Endothelial cell of umbilical vein (primary cell): ENCODE measurements at regions of chr10 and their contacts with region 1.

Region 1: GRCh38 chr10:13074561-13075451 is 25.2 kb upstream of the OPTN start:
- DNase-seq: peak; percentile 61
- H3K4me3 ChIP-seq: no peak overlapping the region
- H3K27ac ChIP-seq: no peak overlapping the region
- H3K4me1 ChIP-seq: no peaks in the 10 kb centered on the region
- H3K27me3 ChIP-seq: peaks cover 5 to 7% of the 10 kb centered on the region in 2 experiments
- CTCF ChIP-seq: peak; percentile 83
- POLR2A ChIP-seq: no peak

Region 2: GRCh38 chr10:12884380-12884779 is 190.4 kb before region 1 on chr10:
- CTCF ChIA-PET with region 1: no interaction called
- POLR2A ChIA-PET with region 1: no interaction called
- dilution Hi-C with region 1: no loop called
- intact Hi-C with region 1: no loop called
- DNase-seq: no peak
- H3K4me3 ChIP-seq: no peak overlapping the region
- H3K27ac ChIP-seq: no peak overlapping the region
- H3K4me1 ChIP-seq: no peaks in the 10 kb centered on the region
- H3K27me3 ChIP-seq: no peaks in the 10 kb centered on the region
- CTCF ChIP-seq: no peak
- POLR2A ChIP-seq: no peak

Region 3: DNA sequence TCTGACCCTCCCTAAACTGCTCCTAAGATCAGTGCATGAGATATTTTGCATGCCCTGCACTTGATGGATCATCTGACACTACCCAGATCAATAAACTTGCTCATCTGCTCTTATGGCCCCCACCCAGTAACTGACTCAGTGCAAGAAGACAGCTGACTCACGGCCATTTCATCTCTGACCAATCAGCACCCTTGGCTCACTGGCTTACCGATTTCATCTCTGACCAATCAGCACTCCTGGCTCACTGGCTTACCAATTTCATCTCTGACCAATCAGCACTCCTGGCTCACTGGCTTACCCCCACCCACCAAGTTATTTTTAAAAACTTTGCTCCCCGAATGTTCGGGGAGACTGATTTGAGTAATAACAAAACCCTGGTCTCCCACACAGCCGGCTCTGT is 12.0 kb before region 1 on chr10:
- CTCF ChIA-PET with region 1: interaction called, 15 read pairs
- POLR2A ChIA-PET with region 1: no interaction called
- dilution Hi-C with region 1: no loop called
- intact Hi-C with region 1: no loop called
- DNase-seq: no peak
- H3K4me3 ChIP-seq: no peak overlapping the region
- H3K27ac ChIP-seq: no peak overlapping the region
- H3K4me1 ChIP-seq: no peaks in the 10 kb centered on the region
- H3K27me3 ChIP-seq: peaks cover 0 to under 1% of the 10 kb centered on the region in 2 experiments
- CTCF ChIP-seq: no peak
- POLR2A ChIP-seq: no peak

Region 4: DNA sequence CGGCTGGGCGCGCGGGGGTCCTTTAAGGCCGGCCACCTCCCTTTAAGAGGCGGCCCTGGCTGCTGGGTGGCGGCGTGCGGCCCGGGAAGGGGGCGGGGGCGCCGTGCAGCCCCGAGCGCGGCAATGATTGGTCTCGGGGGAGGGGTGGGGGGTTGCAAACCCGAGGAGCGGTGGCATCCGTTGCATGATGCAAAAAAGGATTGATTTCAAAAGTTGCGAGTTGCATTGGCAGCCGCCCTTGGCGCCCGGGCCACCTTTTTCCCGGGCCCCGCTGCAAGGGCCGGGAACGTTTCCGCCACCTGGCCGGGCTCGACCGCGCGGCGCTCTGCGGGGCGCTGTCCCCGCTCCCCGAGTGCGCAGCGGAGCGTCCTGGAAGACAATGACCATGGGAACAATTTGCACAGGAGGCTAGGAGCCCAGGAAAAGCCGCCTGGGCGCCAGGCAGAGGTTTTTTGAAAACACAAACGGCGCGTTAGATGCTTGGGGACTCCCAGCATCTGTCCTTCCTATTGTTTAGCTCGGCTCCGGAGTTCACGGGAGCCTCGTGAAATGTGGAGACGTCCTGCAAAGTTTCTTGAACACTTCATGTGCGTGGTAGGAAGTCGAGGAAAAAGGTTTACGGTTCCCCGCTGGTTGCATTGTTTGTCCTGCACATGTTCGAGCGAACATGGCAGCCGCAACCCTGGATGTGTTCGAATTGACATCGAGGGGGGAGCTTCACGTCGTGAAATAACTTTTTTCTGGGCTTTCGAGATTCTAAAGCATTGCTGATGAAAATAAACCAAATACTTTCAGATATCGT is 273.6 kb after region 1 on chr10 and contains the start of gene SEPHS1:
- CTCF ChIA-PET with region 1: no interaction called
- POLR2A ChIA-PET with region 1: no interaction called
- dilution Hi-C with region 1: no loop called
- intact Hi-C with region 1: no loop called
- DNase-seq: peak; percentile 62
- H3K4me3 ChIP-seq: peak within 1 kb of the TSS; percentile 40 to 84 (median 82)
- H3K27ac ChIP-seq: peak within 1 kb of the TSS; percentile 65
- H3K4me1 ChIP-seq: peaks cover 24% of the 10 kb centered on the region
- H3K27me3 ChIP-seq: peaks cover 30 to 36% of the 10 kb centered on the region in 2 experiments
- CTCF ChIP-seq: peak in 1 of 2 donors; percentile 5
- POLR2A ChIP-seq: no peak
- total RNA-seq, gene SEPHS1: 55.4 and 59.9 TPM in 2 replicates